ENCODE measurements at regions of chr20 and their contacts with region 1.

Region 1: DNA sequence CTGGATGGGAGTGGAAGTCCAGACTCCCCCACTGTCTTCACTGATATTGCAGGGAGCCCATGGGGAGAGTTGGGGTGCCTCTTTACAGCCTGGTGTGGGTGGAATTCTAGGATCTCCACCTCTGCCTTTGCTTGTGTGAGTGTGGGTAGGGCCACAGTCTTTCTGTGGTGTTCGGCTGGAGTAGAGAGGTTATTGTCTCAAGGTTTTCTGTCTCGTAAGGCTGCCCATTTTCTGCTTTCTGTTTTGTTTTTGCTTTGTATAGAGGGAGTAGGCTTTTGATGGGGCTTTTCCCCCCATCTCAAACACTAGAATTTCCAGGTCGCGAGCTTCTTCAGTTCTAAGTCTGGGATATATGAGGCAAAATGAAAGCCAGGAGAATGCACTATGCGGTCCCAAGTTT is 40.4 kb upstream of the ELMO2 start:
- DNase-seq: no peak
- H3K4me3 ChIP-seq: no peak overlapping the region
- H3K27ac ChIP-seq: no peak overlapping the region
- H3K4me1 ChIP-seq: no peaks in the 10 kb centered on the region
- H3K27me3 ChIP-seq: no peaks in the 10 kb centered on the region
- CTCF ChIP-seq: no peak
- POLR2A ChIP-seq: no peak

Region 2: DNA sequence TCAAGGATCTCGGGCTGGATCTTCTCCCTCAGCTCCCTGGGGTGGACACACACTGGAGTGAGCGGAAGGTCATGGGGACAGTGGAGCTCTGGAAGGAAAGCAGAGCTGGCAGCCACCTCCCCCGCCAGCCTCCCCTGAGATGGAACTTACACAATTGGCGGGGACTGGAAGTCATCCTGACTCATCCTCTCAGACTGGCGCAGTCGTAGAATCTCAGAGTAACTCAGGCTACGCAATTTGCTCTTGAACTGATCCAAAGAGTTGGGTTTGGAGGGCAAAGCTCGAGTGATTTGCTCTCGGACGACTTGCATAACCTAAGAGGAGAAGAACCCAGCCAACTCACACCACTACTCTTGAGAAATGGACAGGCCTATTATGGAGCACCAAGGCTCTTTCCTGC is 75.2 kb before region 1 on chr20:
- intact Hi-C with region 1: loop called (anchors 2 kb)
- DNase-seq: no peak
- H3K4me3 ChIP-seq: no peak overlapping the region
- H3K27ac ChIP-seq: no peak overlapping the region
- H3K4me1 ChIP-seq: no peaks in the 10 kb centered on the region
- H3K27me3 ChIP-seq: no peaks in the 10 kb centered on the region
- CTCF ChIP-seq: no peak
- POLR2A ChIP-seq: no peak

Region 3: DNA sequence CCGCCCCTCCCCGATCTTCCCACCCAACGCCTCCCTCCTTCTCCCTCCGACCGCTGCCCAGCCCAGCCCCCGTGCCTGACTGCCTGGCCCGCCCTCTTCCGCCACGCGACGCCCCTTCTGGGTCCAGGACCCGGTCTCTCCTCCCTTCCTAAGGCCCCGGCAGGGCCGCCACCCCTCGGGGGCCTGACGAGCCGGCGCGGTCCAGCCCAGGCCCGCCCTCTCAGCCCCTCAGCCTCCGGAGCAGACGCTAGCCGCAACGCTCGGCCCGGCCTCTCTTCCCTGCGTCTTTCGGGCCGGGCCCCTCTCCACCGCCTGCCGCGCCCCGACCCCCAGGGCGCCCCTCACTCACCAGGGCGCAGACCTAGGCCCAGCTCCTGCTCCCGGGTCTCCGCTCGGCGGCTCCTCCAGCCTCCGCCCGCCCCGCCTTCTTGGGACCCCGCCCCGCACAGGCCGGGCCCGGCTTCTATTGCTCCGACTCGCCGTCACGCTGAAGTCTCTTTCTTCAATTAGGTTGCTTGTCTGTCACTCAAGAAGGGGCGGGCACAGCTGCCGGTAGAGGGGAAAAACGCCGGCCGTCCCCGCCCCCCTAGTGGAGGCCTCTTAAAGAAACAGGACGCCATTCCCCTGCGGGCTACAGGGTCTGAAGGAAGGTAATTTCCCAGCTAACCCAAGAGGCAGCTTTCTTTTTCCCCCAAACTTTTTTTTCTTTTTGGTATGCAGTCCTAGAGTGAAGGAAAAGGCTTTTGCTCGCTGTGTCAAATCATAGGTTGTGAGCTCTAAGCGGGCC is 40.5 kb before region 1 on chr20 and contains the start of gene ELMO2:
- intact Hi-C with region 1: no loop called
- DNase-seq: peak; percentile 96 to 98
- H3K4me3 ChIP-seq: peak within 1 kb of the TSS; percentile 82 to 85 (median 83)
- H3K27ac ChIP-seq: peak within 1 kb of the TSS; percentile 89 to 93
- H3K4me1 ChIP-seq: peaks cover 2 to 18% of the 10 kb centered on the region in 2 donors
- H3K27me3 ChIP-seq: no peaks in the 10 kb centered on the region
- CTCF ChIP-seq: peak; percentile 24 to 42 (median 30)
- POLR2A ChIP-seq: peak; percentile 57
- total RNA-seq, gene ELMO2: 41.0 to 63.3 (median 50.8) TPM

Region 4: DNA sequence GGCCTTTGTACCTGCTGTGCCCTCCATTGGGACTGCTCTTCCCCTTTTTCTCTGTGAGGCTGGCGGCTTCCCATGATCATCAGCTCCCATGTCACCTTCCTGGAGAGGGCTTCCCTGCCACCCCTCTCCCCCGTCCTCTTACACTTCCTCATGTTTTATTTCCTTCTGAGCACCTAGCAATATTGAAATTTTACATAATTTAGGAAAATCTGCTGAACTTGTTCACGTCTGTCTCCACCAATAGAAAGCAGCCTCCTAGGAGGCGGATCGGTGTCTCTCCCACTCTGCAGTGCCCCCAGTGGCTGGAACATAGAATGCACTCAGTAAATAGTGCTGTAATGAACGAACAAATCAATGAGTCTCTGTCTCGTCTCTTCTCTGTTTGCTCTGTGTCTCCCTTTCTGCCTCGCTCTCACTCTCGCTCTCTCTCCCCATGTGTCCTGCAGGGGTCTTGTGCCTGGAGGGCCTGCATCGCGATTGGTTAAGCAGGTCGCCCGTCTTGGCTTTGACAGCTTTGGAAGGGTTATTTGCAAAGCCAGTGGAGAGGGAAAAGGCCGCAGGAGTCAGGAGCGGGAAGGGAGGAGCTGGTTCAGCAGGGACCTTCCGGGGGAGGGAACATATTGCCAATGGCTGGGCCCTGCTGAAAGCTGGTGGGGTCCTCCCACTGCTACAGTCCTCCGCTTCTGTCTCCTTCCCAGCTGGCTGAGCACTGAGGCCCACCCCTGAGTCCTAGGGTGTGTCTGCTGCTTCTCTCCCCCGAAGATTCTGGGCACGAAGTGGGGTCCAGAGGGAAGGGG is 115.7 kb after region 1 on chr20:
- intact Hi-C with region 1: no loop called
- DNase-seq: peak; percentile 47 to 64
- H3K4me3 ChIP-seq: peak overlapping the region; percentile 35 to 56 (median 36)
- H3K27ac ChIP-seq: peak overlapping the region; percentile 15 to 33
- H3K4me1 ChIP-seq: no peaks in the 10 kb centered on the region
- H3K27me3 ChIP-seq: no peaks in the 10 kb centered on the region
- CTCF ChIP-seq: peak; percentile 76 to 84 (median 80)
- POLR2A ChIP-seq: no peak

Region 5: GRCh38 chr20:47099825-47100441 is 653.1 kb after region 1 on chr20:
- intact Hi-C with region 1: no loop called
- DNase-seq: peak in 1 of 2 donors; percentile 16
- H3K4me3 ChIP-seq: no peak overlapping the region
- H3K27ac ChIP-seq: peak overlapping the region; percentile 22 to 52
- H3K4me1 ChIP-seq: no peaks in the 10 kb centered on the region
- H3K27me3 ChIP-seq: no peaks in the 10 kb centered on the region
- CTCF ChIP-seq: no peak
- POLR2A ChIP-seq: no peak

Measured in breast epithelium (tissue), 4 donors.